B cell (primary cell): ENCODE measurements at regions of chr5 and their contacts with region 1.

Region 1: DNA sequence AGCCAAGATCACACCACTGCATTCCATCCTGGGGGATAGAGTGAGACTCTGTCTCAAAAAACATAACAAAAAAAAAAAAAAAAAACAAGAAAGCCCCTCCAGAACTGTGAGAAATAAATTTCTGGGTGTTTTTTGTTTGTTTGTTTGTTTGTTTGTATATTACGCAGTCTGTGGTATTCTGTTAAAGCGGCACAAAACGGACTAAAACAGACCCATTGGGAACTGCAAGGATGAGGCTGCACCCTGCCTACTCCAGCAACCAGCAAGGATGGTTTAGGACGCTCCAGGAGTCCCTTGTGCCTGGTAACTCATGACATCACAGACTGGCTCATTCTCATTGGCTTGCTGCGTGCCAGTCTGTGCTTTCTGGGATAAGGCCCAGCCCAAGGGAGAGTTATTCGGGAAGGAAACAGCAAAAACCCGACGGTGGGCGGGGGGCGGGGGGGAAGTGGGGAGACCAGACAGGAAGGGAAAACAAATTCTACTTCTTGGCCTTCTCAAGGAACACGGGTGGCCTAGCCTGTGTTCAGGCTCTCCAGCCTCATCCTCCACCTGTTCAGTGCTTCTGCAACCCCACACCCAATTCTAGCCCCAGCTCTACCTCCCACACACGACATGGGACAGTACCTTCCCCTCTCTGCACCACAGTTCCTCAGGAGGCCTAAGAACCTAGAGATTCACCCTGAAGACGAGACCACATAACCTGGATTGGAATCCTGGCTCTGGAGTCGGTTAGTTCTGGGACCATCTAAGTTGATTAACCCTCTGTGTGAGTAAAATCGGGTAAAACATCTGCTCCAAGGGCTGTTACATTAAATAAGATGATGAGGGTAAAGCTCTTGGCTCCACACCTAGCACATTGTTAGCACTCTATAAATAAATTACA is 2.8 kb downstream of the CD74 start:
- DNase-seq: peak; percentile 81
- ATAC-seq: peak; percentile 4
- H3K4me3 ChIP-seq: peak overlapping the region; percentile 78 to 100 (median 94)
- H3K4me3 Mint-ChIP-seq: peak overlapping the region; percentile 95
- H3K27ac ChIP-seq: peak overlapping the region; percentile 99 to 100
- H3K27ac Mint-ChIP-seq: peak overlapping the region; percentile 99
- H3K4me1 ChIP-seq: peaks cover 52 to 66% of the 10 kb centered on the region in 2 donors
- H3K4me1 Mint-ChIP-seq: peaks cover 68% of the 10 kb centered on the region
- H3K27me3 ChIP-seq: no peaks in the 10 kb centered on the region
- H3K27me3 Mint-ChIP-seq: no peaks in the 10 kb centered on the region
- CTCF ChIP-seq: no peak

Region 2: DNA sequence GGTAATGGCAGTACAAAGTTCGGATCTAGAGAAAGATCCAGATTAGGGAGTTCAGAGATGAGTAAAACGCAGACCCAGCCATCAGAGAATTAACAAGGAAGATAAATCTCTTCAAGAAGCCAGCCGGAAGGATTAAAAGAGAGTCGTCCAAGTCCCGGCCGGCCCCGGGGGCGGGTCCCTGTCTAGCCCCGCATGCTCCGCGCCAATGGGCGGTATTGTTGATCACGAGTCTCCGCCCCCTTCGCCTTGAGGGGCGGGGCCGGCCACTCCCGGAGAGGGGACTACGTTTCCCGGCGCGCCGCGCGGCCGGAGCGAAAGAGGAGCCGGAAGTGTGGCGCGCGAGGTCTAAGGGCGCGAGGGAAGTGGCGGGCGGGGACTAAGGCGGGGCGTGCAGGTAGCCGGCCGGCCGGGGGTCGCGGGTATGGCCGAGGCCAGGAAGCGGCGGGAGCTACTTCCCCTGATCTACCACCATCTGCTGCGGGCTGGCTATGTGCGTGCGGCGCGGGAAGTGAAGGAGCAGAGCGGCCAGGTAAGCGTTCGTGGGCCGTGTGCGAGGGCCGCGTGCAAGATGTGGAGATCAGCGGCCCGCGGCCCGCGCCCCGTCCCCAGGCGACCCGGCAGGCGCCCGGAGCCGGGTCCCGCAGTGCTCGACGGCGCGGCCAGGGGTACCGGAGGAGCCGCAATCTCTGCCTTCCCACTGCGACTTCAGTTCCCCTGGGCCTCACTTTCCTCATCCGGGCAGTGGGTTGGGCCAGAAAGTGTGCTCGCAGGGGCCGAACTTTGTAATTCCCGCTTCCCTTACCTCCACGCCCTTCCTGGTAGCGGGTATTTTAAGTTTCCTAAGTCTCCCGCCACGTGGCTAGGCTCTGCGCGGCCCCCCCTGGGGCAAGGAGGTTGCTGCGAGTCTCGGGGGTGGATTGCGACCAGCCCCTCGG is 52.3 kb before region 1 on chr5 and contains the start of gene TCOF1:
- CTCF ChIA-PET with region 1: interaction called, 3 read pairs
- POLR2A ChIA-PET with region 1: interaction called, 3 read pairs
- intact Hi-C with region 1: loop called (anchors 2 kb)
- DNase-seq: peak; percentile 97
- ATAC-seq: peak; percentile 99
- H3K4me3 ChIP-seq: peak within 1 kb of the TSS; percentile 53 to 77 (median 69)
- H3K4me3 Mint-ChIP-seq: peak within 1 kb of the TSS; percentile 90
- H3K27ac ChIP-seq: peak within 1 kb of the TSS; percentile 23 to 68
- H3K27ac Mint-ChIP-seq: peak within 1 kb of the TSS; percentile 88
- H3K4me1 ChIP-seq: peaks cover 35 to 54% of the 10 kb centered on the region in 2 donors
- H3K4me1 Mint-ChIP-seq: peaks cover 50% of the 10 kb centered on the region
- H3K27me3 ChIP-seq: no peaks in the 10 kb centered on the region
- H3K27me3 Mint-ChIP-seq: no peaks in the 10 kb centered on the region
- CTCF ChIP-seq: no peak
- total RNA-seq, gene TCOF1: 62.4 and 66.5 TPM in 2 replicates

Region 3: DNA sequence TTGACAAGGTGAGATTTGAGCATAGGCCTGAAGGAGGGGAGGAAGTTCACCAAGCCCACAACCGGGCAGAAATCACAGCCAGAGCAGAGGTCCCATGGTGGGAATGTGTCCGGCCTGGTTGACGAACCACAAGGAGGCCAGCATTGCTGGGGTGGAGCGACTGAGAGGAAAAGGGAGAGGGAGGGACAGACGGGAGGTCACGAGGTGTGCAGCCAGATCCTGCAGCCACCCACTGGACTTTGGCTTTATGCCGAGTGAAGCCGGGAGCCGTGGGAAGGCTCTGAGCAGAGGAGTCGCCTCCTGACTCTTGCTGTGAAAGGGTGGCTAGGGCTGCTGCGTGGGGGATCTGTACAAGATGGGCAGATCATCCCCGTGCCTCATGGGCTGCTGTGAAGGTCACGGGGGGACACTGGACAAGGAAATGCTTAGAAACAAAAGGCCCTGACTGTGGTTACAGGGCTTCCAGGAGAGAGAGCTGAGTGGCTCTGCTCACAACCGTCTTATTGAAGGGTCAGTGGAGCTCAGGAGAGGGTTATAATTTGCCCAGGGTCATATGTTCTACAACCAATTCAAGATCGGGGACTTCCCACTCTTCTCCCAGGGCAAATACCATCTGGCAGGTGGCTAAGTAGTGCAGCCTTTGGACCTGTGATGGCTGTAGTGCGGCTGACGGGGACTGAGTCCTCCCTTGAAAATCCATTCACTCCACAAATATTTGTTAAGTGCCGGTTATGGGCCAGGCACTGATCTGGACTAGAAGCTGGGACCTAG is 18.4 kb after region 1 on chr5:
- CTCF ChIA-PET with region 1: interaction called, 396 read pairs
- POLR2A ChIA-PET with region 1: interaction called, 387 read pairs
- intact Hi-C with region 1: loop called (anchors 1 kb)
- DNase-seq: no peak
- ATAC-seq: no peak
- H3K4me3 ChIP-seq: no peak overlapping the region
- H3K4me3 Mint-ChIP-seq: peak overlapping the region; percentile 0
- H3K27ac ChIP-seq: no peak overlapping the region
- H3K27ac Mint-ChIP-seq: peak overlapping the region; percentile 69
- H3K4me1 ChIP-seq: peaks cover 40 to 47% of the 10 kb centered on the region in 2 donors
- H3K4me1 Mint-ChIP-seq: peaks cover 50% of the 10 kb centered on the region
- H3K27me3 ChIP-seq: no peaks in the 10 kb centered on the region
- H3K27me3 Mint-ChIP-seq: no peaks in the 10 kb centered on the region
- CTCF ChIP-seq: no peak

Region 4: GRCh38 chr5:151080623-151081430 is 670.9 kb after region 1 on chr5 and contains the start of gene TNIP1:
- CTCF ChIA-PET with region 1: no interaction called
- POLR2A ChIA-PET with region 1: no interaction called
- intact Hi-C with region 1: loop called (anchors 10 kb)
- DNase-seq: peak; percentile 96
- ATAC-seq: peak; percentile 88
- H3K4me3 ChIP-seq: peak within 1 kb of the TSS; percentile 71 to 96 (median 85)
- H3K4me3 Mint-ChIP-seq: peak within 1 kb of the TSS; percentile 87
- H3K27ac ChIP-seq: peak within 1 kb of the TSS; percentile 96 to 100
- H3K27ac Mint-ChIP-seq: peak within 1 kb of the TSS; percentile 88
- H3K4me1 ChIP-seq: peaks cover 83 to 84% of the 10 kb centered on the region in 2 donors
- H3K4me1 Mint-ChIP-seq: peaks cover 82% of the 10 kb centered on the region
- H3K27me3 ChIP-seq: no peaks in the 10 kb centered on the region
- H3K27me3 Mint-ChIP-seq: no peaks in the 10 kb centered on the region
- CTCF ChIP-seq: no peak
- total RNA-seq, gene TNIP1: 294 and 295 TPM in 2 replicates

Region 5: GRCh38 chr5:151771259-151772028 is 1361.6 kb after region 1 on chr5 and contains the start of gene G3BP1:
- CTCF ChIA-PET with region 1: no interaction called
- POLR2A ChIA-PET with region 1: no interaction called
- intact Hi-C with region 1: loop called (anchors 5 kb)
- DNase-seq: peak; percentile 100
- ATAC-seq: peak; percentile 74
- H3K4me3 ChIP-seq: peak within 1 kb of the TSS; percentile 71 to 91 (median 81)
- H3K4me3 Mint-ChIP-seq: peak within 1 kb of the TSS; percentile 95
- H3K27ac ChIP-seq: peak within 1 kb of the TSS; percentile 87 to 92
- H3K27ac Mint-ChIP-seq: peak within 1 kb of the TSS; percentile 93
- H3K4me1 ChIP-seq: peaks cover 42 to 45% of the 10 kb centered on the region in 2 donors
- H3K4me1 Mint-ChIP-seq: peaks cover 44% of the 10 kb centered on the region
- H3K27me3 ChIP-seq: no peaks in the 10 kb centered on the region
- H3K27me3 Mint-ChIP-seq: no peaks in the 10 kb centered on the region
- CTCF ChIP-seq: peak; percentile 66
- total RNA-seq, gene G3BP1: 159 and 173 TPM in 2 replicates